Left cardiac atrium (tissue), 4 donors: ENCODE measurements at regions of chr20 and their contacts with region 1.

Region 1: DNA sequence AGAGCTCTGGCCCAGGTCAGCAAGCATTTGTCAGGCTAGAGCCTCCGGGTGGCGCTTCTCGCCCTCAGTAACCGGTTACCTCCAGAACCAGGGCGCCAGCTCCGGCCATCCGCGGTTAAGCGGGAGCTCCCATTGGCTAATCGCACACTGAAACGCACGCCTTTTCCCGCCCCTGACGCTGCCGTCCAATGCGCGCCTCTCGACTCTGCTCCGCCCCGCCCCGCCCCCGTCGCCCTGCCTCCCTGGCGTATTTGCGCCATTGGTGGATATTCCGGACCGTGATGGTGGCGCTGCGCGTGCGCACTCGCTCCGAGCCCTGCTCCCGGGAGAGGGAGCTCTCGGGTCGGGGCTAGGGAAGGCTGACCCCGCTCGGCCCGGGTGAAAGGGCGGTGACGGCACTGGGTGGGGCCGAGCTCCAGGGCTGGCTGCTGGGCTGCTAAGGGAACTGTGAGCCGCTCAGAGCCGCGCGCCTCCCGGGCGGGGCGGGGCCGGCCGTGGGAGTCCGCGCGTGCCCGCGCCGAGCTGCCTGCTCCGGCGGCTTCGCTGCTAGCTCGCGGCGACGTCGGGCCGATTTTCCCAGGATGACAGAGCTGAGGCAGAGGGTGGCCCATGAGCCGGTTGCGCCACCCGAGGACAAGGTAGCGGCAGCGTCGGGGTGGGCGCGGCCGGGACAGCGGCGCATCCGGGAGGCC is at the start of gene CDS2:
- DNase-seq: peak; percentile 100
- ATAC-seq: peak; percentile 97 to 98
- total RNA-seq, gene CDS2: 57.7 to 77.7 TPM

Region 2: DNA sequence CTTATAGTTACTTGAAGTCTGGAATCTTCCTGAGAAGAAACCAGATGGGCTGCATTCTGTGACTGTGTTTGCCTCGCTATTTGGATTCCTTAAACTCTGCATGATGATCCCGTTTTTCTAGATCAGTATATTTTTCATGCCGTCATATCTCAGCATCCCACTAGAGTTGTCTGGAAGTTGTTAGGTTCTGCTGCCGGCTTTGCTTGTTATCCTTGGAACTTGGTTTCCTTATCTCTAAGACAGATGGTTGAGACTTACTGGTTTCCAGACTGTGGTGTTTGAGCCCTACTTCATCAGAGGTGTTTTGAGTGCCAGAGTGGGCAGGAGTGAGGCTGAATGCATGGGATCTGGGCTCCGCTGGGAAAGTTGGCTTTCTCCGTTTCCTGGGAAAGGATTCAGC is 50.4 kb after region 1 on chr20:
- intact Hi-C with region 1: loop called in 1 of 2 experiments (anchors 5 kb)
- DNase-seq: no peak
- ATAC-seq: no peak

Region 3: DNA sequence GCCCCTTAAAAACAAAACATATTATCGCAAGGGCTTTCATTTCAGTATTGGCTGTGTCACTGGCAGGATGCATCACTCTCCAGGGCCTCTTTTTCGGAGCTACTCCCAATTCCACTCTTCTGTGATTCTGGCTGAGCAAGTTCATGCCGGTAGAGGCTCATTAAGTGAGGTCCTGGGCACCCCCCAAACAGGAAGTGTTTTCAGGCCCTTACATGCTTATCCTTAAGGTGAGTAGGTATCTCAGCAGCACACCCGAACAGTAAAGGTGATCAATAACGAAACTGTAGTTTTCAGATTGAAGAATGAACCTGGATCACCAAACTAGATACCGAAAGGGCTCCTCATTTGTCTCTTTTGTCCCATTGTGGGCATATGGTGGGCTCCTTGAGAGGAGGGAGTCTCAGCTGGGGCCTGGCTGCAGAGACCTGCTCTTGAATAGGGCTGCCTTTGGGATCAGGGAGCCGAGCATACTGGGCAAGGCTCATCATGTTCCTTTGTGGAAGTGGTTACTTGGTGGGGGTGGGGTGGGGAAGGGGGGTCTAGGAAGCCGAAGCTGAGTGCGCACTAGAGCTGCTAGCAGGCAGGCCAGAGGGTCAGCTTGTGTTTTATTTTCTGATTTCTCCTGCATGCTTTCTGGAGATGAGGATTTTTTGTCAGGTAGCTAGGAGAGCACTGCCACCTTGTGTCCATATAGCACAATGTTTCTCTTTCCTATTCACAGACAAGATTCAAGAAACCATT is 65.3 kb after region 1 on chr20:
- intact Hi-C with region 1: loop called (anchors 1 to 5 kb)
- DNase-seq: no peak
- ATAC-seq: peak; percentile 66 to 87